Prostate gland (tissue), 2 donors: ENCODE measurements at regions of chr1 and their contacts with region 1.

Region 1: GRCh38 chr1:40344597-40344996 is 27.5 kb upstream of the COL9A2 start:
- DNase-seq: peak; percentile 14
- H3K4me3 ChIP-seq: no peak overlapping the region
- H3K27ac ChIP-seq: no peak overlapping the region
- H3K4me1 ChIP-seq: no peaks in the 10 kb centered on the region
- H3K27me3 ChIP-seq: no peaks in the 10 kb centered on the region
- CTCF ChIP-seq: no peak
- POLR2A ChIP-seq: no peak

Region 2: GRCh38 chr1:40281853-40282252 is 62.7 kb before region 1 on chr1:
- intact Hi-C with region 1: no loop called
- DNase-seq: no peak
- H3K4me3 ChIP-seq: no peak overlapping the region
- H3K27ac ChIP-seq: peak overlapping the region in 1 of 2 donors; percentile 39
- H3K4me1 ChIP-seq: no peaks in the 10 kb centered on the region
- H3K27me3 ChIP-seq: no peaks in the 10 kb centered on the region
- CTCF ChIP-seq: no peak
- POLR2A ChIP-seq: no peak

Region 3: DNA sequence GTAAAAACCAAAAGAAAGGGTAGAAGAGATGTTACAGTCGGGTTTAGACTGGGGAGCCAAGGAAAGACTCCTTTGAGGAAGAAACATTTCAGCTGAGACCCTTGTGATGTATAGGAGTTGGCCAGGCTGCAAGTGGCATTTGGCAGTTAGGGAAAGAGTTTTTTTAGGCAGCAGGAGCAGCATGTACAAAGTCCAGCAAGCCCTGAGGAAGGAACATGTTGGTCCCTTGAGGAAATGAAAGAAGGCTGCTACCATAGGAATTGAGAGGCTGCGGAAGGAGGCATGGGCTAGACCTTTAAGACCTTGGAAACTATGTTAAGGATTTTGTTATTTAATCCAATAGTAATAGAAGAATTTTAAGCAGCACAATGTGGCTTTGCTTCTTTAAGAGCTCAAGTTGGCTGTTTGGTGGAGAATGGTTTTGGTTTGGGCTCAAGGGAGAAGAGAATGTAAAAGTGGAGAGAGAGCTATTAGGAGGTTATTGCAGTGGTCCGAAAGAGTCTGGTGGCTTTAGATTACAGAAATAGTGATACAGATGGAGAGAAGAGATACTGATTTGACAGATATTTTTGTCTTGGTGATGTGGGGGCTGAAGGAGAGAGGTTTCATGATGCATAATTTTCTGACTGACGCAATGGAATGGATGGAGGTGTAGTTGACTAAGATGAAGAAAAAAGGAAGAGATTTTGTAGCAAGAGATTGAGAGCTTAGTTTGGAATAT is 55.5 kb after region 1 on chr1:
- intact Hi-C with region 1: no loop called
- DNase-seq: no peak
- H3K4me3 ChIP-seq: no peak overlapping the region
- H3K27ac ChIP-seq: no peak overlapping the region
- H3K4me1 ChIP-seq: no peaks in the 10 kb centered on the region
- H3K27me3 ChIP-seq: no peaks in the 10 kb centered on the region
- CTCF ChIP-seq: no peak
- POLR2A ChIP-seq: no peak

Region 4: GRCh38 chr1:40411294-40411693 is 66.7 kb after region 1 on chr1:
- intact Hi-C with region 1: loop called (anchors 5 kb)
- DNase-seq: no peak
- H3K4me3 ChIP-seq: no peak overlapping the region
- H3K27ac ChIP-seq: no peak overlapping the region
- H3K4me1 ChIP-seq: no peaks in the 10 kb centered on the region
- H3K27me3 ChIP-seq: no peaks in the 10 kb centered on the region
- CTCF ChIP-seq: no peak
- POLR2A ChIP-seq: no peak

Region 5: GRCh38 chr1:40449684-40450494 is 105.3 kb after region 1 on chr1 and contains the start of gene ZFP69B:
- intact Hi-C with region 1: no loop called
- DNase-seq: peak; percentile 78
- H3K4me3 ChIP-seq: peak within 1 kb of the TSS; percentile 58 to 71
- H3K27ac ChIP-seq: peak within 1 kb of the TSS; percentile 45 to 72
- H3K4me1 ChIP-seq: no peaks in the 10 kb centered on the region
- H3K27me3 ChIP-seq: no peaks in the 10 kb centered on the region
- CTCF ChIP-seq: peak in 1 of 4 experiments; percentile 23
- POLR2A ChIP-seq: peak; percentile 55
- total RNA-seq, gene ZFP69B: 0.46 to 2.9 TPM